Right ventricle myocardium superior (tissue), 1 donor: ENCODE measurements at regions of chr2 and their contacts with region 1.

Region 1: GRCh38 chr2:69643602-69644505 is at the start of gene AAK1:
- DNase-seq: peak; percentile 95
- ATAC-seq: peak; percentile 95
- total RNA-seq, gene AAK1: 87.2 TPM

Region 2: DNA sequence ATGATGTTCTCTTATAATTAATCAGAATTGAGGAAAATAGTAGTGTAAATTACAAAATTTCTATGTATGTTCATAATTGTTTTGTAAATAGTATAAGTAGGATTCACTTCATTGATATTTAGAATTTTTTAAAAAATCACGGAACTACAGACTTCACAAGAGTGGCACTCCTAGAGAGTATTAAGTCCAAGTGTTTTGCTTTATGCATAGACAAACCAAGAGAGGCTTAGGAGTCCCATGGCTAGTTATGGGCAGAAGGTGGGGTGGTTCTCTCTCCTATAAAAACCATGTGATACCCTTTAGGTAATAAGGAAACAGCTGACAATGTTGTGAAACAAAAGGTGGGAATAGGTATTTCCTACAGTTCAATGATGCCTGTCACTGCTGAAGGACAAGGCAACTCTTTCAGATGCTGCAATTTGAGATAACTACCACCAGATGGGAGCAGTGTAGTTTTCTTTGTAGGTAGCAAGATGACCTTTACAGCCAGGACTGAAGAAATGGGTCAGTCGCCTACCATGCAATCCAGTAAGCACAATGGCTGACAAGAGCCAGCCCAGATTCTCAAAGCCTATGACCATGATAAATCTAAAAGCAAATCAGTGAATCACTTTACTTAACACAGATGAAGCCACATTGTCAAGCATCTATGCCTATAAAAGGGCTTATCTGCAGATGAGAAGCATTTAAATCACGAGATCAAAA is 84.3 kb before region 1 on chr2:
- intact Hi-C with region 1: loop called (anchors 5 kb)
- DNase-seq: no peak
- ATAC-seq: peak; percentile 81

Region 3: DNA sequence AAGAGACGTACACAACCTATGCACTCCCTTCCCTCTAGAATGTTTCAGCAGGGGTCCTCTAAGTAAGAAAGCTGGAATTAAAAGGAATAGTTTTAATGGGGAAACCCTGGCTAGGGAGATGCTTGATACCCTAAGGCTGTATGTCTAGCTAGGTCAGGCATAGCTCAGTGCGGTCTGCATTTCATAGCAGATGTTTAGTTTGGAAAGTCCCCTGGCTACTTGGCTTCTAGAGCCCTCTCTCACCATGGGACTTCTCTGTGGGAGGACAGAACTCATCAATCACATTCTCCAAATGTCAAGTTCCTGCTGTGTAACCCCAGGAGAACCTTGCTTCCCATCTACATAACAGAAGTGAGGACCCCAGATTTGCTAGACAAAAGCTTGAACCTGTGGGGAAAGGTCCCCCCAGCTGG is 74.0 kb after region 1 on chr2:
- intact Hi-C with region 1: loop called (anchors 10 kb)
- DNase-seq: no peak
- ATAC-seq: no peak

Region 4: GRCh38 chr2:69829256-69830046 is 185.6 kb after region 1 on chr2 and contains the start of gene GMCL1:
- intact Hi-C with region 1: no loop called
- DNase-seq: peak; percentile 99
- ATAC-seq: peak; percentile 99
- total RNA-seq, gene GMCL1: 4.1 TPM